Activated naive CD4-positive, alpha-beta T cell treated with anti-CD3 and anti-CD28 coated beads, Interleukin-2, amount 10 ng/mL, durations not matched to agents 7 days and 5 days (primary cell): ENCODE measurements at regions of chr20 and their contacts with region 1.

Region 1: DNA sequence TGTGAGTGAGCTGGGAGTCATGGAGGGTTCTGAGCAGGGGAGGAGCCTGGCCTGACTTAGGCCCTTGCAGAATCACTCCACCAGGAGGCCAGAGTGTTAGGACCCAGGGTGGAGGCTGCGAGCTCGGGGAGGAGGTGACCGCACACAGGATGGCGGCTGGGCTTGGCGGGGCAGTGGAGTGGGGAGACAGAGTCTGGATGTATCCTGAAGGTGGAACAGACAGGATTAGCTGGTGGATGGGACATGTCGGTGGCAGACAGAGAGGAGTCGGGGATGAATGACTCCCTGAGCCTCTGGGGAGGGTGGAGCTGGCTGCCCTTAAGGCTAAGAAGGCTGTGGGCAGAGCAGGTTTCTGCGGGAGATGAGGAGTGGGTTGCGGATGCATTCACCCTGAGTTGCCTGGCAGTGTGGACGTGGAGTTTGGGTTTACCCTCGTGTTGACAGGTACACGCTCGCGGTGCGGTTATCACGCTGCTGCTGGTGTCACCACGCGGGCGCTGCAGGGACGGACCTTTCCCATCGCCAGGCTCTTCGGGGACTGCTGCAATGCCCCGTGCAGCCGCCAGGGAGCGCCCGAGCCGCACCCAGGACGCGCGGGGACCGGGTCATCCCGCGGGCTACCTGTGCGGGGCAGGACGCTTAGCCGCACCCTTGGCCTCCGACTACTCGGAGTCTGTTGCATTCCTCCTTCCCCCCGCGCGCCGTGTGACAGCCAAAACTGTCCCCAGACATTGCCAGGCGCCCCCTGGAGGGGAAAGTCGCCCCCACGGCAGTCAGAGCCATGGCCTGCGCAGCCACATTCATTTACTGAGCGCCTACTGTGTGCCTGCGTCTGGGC is 43.0 kb upstream of the PTGIS start:
- DNase-seq: peak; percentile 82
- H3K4me3 Mint-ChIP-seq: peak overlapping the region; percentile 16
- H3K27ac Mint-ChIP-seq: peak overlapping the region; percentile 60
- H3K4me1 Mint-ChIP-seq: peaks cover 26% of the 10 kb centered on the region
- H3K27me3 Mint-ChIP-seq: peaks cover 22% of the 10 kb centered on the region

Region 2: DNA sequence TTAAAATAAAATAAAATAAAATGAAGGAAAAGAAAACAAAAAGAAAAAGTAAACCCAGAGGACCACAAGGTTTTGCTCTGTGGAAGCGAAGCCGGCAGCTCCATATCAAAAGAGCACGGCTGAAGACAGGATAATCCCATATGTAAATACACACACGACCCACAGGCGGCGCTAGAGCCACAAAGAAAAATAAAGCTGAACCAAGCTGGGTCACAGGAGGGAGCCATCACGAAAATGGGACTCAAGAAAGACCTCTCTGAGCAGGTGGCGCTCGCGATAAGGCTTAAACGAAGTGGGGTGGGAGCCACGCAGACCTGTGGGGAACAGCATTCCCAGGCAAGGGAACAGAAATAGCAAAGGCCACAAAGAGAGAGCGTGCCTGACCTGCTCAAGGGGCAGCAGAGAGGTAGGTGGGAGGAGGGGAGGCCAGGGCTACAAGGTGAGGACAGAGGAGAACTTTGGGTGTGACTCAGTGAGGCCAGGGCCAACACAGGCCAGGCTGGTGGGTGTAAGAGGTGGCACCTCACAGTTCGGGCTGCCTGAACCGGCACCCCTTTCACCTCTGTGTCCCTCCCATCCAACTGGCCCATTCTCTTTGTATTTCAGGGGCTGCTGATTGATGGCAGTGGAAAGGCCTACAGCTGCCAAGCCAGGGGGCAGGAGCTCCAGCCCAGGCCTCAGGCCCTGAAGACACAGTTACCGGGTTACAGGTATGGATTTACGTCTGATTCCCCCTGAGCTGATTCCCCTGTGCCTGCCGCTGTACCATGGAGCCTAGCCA is 69.0 kb before region 1 on chr20:
- CTCF ChIA-PET with region 1: interaction called, 532 read pairs
- DNase-seq: peak; percentile 83
- H3K4me3 Mint-ChIP-seq: no peak overlapping the region
- H3K27ac Mint-ChIP-seq: peak overlapping the region; percentile 31
- H3K4me1 Mint-ChIP-seq: peaks cover 17% of the 10 kb centered on the region
- H3K27me3 Mint-ChIP-seq: peaks cover 54% of the 10 kb centered on the region

Region 3: DNA sequence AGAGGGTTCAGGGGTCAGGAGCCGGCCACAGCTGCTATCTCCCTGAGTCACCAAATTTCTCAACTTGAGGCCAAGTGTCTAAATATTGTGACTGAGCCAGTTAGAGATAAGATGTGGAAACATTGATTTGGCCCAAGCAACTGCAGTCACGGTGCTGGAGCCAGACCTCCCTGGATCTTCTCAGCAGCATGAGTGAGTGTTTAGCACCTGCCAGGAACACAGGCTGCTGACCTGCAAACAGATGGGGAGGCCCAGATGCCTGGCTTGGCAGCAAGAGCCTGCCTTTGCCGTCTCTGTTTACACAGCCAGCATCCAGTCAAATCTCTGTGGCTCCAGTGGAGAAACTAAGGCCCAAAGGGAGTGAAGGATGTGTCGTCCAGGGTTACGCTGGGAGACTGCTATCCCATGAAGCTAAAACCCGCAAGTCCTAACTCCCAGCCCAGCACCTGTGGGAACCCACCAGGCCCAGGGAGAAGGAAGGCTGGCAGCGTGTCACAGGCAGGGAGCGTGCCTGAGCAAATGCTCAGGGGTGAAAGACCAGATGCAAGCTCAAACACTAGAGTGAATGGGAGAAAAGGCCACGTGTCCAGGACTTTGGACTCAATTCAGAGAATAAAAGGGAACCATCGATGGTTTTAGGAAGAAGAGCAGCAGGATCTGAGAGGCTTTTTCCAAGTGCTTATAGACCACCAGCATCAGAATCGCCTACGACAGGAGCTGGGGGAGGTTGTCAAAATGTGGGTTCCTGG is 27.1 kb before region 1 on chr20:
- CTCF ChIA-PET with region 1: interaction called, 12 read pairs
- DNase-seq: no peak
- H3K4me3 Mint-ChIP-seq: no peak overlapping the region
- H3K27ac Mint-ChIP-seq: no peak overlapping the region
- H3K4me1 Mint-ChIP-seq: peaks cover 26% of the 10 kb centered on the region
- H3K27me3 Mint-ChIP-seq: peaks cover 86% of the 10 kb centered on the region

Region 4: GRCh38 chr20:49653925-49654434 is 43.1 kb after region 1 on chr20:
- CTCF ChIA-PET with region 1: no interaction called
- DNase-seq: no peak
- H3K4me3 Mint-ChIP-seq: no peak overlapping the region
- H3K27ac Mint-ChIP-seq: no peak overlapping the region
- H3K4me1 Mint-ChIP-seq: no peaks in the 10 kb centered on the region
- H3K27me3 Mint-ChIP-seq: no peaks in the 10 kb centered on the region

Region 5: DNA sequence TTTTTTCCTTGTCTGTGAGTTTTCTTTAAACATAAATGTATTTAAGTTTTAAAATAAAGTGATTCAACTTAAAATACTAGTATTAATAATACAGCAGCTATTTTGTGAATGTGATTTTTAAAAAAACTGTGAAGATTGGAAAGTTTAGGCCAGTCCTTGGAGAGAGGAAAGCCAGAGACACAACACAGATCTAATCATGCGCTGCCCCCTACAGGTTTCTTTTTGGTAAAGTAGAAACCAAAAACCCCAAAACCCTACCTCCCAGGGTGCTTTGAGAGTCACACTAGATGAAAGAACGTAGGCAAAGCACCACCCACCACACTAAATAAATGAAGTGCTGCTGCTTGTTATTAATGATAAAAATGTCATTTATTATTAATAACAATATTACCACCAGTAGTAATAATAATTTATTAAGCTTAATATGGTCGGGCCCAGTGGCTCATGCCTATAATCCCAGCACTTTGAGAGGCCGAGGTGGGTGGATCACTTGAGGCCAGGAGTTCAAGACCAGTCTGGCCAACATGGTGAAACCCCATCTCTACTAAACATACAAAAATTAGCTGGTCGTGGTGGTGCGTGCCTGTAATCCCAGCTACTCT is 235.4 kb after region 1 on chr20:
- CTCF ChIA-PET with region 1: interaction called, 57 read pairs
- DNase-seq: peak; percentile 65
- H3K4me3 Mint-ChIP-seq: no peak overlapping the region
- H3K27ac Mint-ChIP-seq: no peak overlapping the region
- H3K4me1 Mint-ChIP-seq: peaks cover 26% of the 10 kb centered on the region
- H3K27me3 Mint-ChIP-seq: no peaks in the 10 kb centered on the region

Region 6: DNA sequence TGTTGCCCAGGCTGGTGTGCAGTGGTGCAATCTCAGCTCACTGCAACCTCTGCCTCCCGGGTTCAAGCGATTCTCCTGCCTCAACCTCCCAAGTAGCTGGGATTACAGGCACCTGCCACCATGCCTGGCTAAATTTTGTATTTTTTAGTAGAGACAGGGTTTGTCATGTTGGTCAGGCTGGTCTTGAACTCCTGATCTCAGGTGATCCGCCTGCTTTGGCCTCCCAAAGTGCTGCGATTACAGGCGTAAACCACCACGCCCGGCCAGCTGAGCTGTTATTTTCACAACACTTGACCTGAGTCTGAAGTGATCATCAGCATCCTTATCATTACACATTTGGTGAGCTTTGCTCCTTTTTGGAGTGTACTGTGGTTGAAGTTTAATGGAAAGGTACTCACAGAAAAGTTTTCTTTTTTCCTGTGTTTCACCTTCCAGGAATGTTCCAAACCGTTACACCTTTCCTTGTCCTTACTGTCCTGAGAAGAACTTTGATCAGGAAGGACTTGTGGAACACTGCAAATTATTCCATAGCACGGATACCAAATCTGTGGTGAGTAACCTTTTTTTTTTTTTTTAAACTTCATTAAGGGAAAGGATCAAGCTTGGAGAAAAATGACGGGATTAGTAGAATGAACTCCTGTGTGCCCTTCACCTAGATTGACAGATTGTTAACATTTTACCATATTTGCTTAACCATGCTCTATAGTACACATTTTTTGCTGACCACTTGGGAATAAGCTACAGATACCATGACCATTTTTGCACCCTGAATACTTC is 335.0 kb after region 1 on chr20:
- CTCF ChIA-PET with region 1: no interaction called
- DNase-seq: no peak
- H3K4me3 Mint-ChIP-seq: no peak overlapping the region
- H3K27ac Mint-ChIP-seq: no peak overlapping the region
- H3K4me1 Mint-ChIP-seq: peaks cover 10% of the 10 kb centered on the region
- H3K27me3 Mint-ChIP-seq: no peaks in the 10 kb centered on the region